ENCODE measurements at regions of chr5 and their contacts with region 1.

Region 1: GRCh38 chr5:157142317-157143126 is at the start of gene MED7:
- DNase-seq: peak; percentile 98
- H3K4me3 Mint-ChIP-seq: peak within 1 kb of the TSS; percentile 95
- H3K27ac Mint-ChIP-seq: peak within 1 kb of the TSS; percentile 99
- H3K4me1 Mint-ChIP-seq: peaks cover 45% of the 10 kb centered on the region
- H3K27me3 Mint-ChIP-seq: no peaks in the 10 kb centered on the region
- total RNA-seq, gene MED7: 13.2 and 14.6 TPM in 2 replicates

Region 2: DNA sequence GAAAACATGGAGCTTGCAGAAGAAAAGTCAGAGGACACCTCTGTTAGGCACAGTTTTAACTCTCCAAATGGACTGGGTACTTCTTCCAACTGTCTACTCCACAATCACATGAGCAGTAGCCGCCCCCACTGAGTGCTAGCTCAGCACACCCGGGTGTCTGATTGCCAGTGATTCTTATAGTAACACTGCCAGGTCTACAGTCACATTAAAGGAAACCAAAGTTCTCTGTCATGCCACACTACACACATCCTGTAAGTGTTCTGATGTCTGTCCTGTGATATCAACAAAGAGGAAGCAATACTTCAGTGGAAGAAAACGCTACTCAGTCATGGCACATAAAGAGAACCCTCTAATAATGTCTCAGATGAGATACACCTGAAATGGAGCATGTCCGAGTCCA is 33.5 kb before region 1 on chr5 and contains the start of gene HAVCR2:
- intact Hi-C with region 1: loop called (anchors 2 kb)
- DNase-seq: peak; percentile 90
- H3K4me3 Mint-ChIP-seq: peak within 1 kb of the TSS; percentile 97
- H3K27ac Mint-ChIP-seq: peak within 1 kb of the TSS; percentile 98
- H3K4me1 Mint-ChIP-seq: peaks cover 58% of the 10 kb centered on the region
- H3K27me3 Mint-ChIP-seq: no peaks in the 10 kb centered on the region
- total RNA-seq, gene HAVCR2: 70.0 and 73.1 TPM in 2 replicates

Region 3: GRCh38 chr5:157116483-157116954 is 26.0 kb before region 1 on chr5:
- intact Hi-C with region 1: loop called (anchors 2 kb)
- DNase-seq: peak; percentile 68
- H3K4me3 Mint-ChIP-seq: peak overlapping the region; percentile 26
- H3K27ac Mint-ChIP-seq: peak overlapping the region; percentile 70
- H3K4me1 Mint-ChIP-seq: peaks cover 33% of the 10 kb centered on the region
- H3K27me3 Mint-ChIP-seq: no peaks in the 10 kb centered on the region

Region 4: GRCh38 chr5:157464519-157465171 is 322.1 kb after region 1 on chr5:
- intact Hi-C with region 1: loop called (anchors 10 kb)
- DNase-seq: peak; percentile 83
- H3K4me3 Mint-ChIP-seq: peak overlapping the region; percentile 0
- H3K27ac Mint-ChIP-seq: peak overlapping the region; percentile 80
- H3K4me1 Mint-ChIP-seq: peaks cover 40% of the 10 kb centered on the region
- H3K27me3 Mint-ChIP-seq: peaks cover 17% of the 10 kb centered on the region

Region 5: DNA sequence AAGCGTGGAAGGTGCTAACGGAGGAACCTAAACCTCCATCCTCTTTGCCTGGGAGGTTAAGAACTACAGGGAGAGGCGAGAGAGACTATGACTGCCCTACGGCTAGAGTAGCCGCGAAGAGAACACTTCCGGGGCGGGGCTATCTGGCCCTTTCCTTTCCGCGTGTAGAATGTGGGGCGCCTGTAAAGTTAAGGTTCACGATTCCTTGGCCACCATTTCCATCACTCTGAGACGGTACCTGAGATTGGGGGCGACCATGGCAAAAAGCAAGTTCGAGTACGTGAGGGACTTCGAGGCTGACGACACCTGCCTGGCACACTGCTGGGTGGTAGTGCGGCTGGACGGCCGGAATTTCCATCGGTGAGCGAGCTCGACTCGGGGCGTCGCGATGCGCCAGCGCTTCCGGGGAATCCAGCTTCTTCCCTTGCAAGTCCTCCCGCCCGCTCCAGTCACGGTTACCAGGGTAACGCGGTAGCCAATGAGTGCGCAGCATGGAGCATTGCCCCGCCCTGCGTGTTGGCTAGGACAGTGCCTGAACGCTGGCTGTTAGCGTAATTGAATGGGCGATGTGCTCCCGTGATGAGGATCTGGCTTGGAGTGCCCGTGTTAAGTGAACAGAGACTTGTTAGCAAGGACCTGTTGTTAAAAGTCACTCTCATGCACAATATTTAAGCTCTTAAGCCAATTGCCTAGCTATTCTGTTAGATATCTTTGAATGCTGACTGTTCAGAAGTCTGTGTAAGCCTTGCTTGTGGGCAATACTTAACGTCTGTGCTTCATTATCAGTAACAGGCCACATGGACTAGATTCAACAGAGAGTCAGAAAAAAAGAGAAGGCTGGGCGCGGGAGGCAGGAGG is 589.0 kb after region 1 on chr5 and contains the start of gene THG1L:
- intact Hi-C with region 1: loop called (anchors 2 kb)
- DNase-seq: peak; percentile 100
- H3K4me3 Mint-ChIP-seq: peak within 1 kb of the TSS; percentile 97
- H3K27ac Mint-ChIP-seq: peak within 1 kb of the TSS; percentile 98
- H3K4me1 Mint-ChIP-seq: peaks cover 25% of the 10 kb centered on the region
- H3K27me3 Mint-ChIP-seq: no peaks in the 10 kb centered on the region
- total RNA-seq, gene THG1L: 25.0 and 26.7 TPM in 2 replicates

Measured in activated CD4-positive, alpha-beta T cell treated with anti-CD3 and anti-CD28 coated beads, Interleukin-2, amount 10 ng/mL, durations not matched to agents 24 days and 14 days (primary cell).